Stomach (tissue), 19 donors: ENCODE measurements at regions of chr2 and their contacts with region 1.

Region 1: DNA sequence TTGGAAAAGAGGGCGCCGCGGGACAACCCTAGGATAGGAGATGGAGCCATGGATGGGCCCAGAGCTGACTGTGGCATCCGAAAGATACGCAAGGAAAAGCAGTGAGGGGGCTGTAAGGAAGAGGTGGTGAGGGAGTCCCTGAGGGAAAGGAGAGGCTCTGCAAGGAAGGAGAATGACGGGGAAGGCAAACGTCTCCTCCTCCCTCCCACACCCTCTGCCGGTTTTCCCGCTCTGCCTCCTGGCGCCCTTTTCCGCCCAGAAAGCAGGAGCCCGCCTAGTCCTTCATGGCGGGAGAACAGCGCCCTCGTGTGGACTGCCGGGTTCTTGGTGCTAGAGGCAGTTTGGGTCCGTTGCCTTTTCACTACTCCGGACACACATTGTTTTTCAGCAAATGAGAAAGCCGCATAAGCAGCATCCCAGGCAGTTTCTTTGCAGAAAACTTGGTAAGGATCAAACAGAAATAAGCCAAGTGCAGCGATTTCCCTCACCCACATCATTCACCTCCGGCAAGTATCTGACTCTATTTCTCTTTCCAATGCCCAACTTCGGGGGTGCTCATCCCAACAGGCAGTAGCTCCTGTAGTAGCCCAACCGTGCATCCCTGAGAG is 200.4 kb downstream of the INO80D start:
- DNase-seq: peak; percentile 89 to 93
- H3K4me3 ChIP-seq: no peak overlapping the region
- H3K27ac ChIP-seq: no peak overlapping the region
- H3K4me1 ChIP-seq: peaks cover 0 to 9% (median 4%) of the 10 kb centered on the region in 4 donors
- H3K27me3 ChIP-seq: no peaks in the 10 kb centered on the region
- CTCF ChIP-seq: peak in 5 of 7 experiments; percentile 76 to 90 (median 82)
- EP300 ChIP-seq: no peak
- POLR2A ChIP-seq: no peak

Region 2: DNA sequence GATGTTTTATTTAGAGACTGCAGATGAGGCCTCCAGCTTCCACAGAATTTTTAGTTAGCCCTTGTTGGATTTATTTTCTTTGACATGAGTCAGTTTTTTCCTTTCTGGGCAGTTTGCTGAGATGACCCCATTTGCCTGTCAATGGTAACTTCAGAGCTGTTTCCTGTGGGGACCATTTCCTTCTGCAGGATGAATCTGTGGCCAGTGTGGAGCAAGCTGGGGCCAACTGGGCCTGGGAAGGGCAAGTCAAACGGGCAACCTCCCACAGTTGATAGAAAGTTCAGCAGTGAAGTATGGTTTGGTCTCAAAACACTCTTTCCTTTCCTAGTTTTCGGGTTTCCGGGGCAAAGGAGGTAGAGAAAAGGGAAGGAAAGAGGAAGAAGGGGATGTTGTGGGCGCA is 494.7 kb before region 1 on chr2:
- intact Hi-C with region 1: no loop called
- DNase-seq: no peak
- H3K4me3 ChIP-seq: no peak overlapping the region
- H3K27ac ChIP-seq: no peak overlapping the region
- H3K4me1 ChIP-seq: no peaks in the 10 kb centered on the region
- H3K27me3 ChIP-seq: no peaks in the 10 kb centered on the region
- CTCF ChIP-seq: no peak
- EP300 ChIP-seq: no peak
- POLR2A ChIP-seq: no peak

Region 3: DNA sequence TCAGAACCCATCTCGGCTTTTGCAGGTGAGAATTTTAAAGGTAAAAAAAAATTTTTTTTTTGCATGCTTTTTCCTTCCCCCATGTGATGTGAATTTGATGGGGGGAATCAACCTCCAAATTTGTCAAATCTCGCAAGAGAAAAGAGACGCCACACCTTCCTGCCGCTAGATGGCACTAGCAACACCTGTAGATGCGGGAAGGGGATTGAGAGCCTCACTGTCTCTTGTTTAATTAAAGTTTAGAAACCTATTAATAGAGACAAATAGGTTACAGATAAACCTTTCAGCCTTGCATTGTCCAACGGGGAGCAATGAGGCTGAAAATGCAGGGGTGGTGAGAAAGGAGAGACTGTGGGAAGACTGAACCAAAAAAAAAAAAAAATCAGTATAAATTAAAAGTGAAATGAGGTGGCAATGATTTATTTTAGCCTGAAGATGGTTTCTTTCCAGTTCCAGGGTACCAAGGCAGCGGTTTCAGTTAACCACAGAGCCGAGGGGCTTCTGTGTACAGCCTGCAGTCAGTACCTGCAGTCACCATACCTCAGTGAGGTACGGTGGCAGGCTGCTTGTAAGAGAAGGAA is 118.7 kb before region 1 on chr2:
- intact Hi-C with region 1: loop called (anchors 10 kb)
- DNase-seq: peak; percentile 75 to 88
- H3K4me3 ChIP-seq: no peak overlapping the region
- H3K27ac ChIP-seq: peak overlapping the region in 3 of 5 donors; percentile 9 to 80 (median 76)
- H3K4me1 ChIP-seq: peaks cover 35 to 77% (median 55%) of the 10 kb centered on the region in 4 donors
- H3K27me3 ChIP-seq: no peaks in the 10 kb centered on the region
- CTCF ChIP-seq: peak in 5 of 7 experiments; percentile 42 to 86 (median 82)
- EP300 ChIP-seq: no peak
- POLR2A ChIP-seq: no peak